ENCODE measurements at regions of chr4 and their contacts with region 1.

Region 1: DNA sequence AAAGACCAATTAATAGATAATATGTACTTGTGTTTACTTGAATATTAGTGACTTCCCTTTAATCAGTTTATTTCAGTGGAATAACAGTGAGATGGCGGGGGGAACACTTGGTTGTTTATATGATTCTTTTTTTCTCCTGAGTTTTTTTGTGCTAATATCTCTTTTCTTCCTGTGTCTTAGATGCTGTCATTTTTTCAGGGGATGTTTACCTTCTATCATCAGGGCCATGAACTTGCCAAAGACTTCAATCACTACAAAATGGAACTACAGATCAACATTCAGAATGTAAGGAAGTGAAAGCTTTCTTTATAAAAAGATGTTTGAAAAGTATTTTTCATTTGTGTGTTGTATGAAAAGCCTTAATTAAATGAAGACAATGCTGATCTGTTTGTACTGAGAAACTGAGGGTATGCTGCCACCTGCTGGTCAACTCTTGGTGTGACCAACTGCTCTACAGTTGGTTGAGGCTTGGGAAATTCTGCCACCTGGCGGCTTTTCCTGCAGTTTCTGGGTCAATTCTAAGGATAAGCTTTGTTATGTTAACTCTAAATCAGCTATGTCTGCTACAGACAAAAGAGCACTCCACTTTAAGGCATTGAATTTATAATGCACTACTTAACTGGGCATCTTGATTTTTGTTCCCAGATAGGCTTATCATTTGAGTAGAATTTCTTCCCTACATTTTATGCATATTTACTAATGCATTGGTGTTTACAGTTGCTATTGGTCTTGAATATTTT is 134.8 kb downstream of the ARHGAP10 start:
- DNase-seq: peak; percentile 81 to 94 (median 89)
- ATAC-seq: peak; percentile 99
- H3K4me3 ChIP-seq: no peak overlapping the region
- H3K27ac ChIP-seq: no peak overlapping the region
- H3K4me1 ChIP-seq: no peaks in the 10 kb centered on the region
- H3K27me3 ChIP-seq: no peaks in the 10 kb centered on the region
- CTCF ChIP-seq: peak; percentile 98 to 99

Region 2: DNA sequence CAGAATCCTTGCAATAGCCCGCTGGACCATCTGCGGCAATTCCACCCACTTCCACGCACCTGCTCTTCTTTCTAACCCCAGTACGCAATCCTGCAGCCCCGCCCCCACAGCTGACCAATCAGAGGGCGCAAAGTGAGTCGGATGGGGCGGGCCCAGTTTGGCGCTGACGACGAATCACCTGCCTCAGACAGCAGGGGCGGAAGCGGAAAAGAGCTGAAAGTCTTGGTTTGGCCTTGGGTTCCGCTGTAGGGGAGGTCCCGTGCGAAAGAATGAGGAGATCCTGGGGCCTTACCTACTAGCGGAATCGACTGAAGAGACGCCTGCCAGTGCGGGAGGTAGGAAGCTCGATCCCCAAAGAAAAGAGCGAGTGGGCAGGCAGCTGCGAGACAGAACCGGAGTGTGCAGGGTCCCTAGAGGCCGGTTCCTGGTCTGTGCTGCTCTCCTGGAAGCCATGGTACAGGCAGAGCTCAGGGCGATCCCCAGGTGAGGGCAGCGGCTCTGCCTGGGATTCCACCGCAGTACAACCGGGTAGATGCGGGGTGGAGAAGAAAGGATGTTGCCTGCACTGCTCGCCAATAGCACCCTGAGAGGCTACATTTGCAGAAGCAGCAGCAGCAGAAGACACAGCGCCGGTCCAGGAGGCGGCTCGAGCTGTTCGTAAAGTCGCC is 249.4 kb before region 1 on chr4 and contains the start of gene TMEM184C:
- intact Hi-C with region 1: loop called in 1 of 2 experiments (anchors 10 kb)
- DNase-seq: peak; percentile 87 to 98 (median 96)
- ATAC-seq: peak; percentile 99
- H3K4me3 ChIP-seq: peak within 1 kb of the TSS; percentile 69 to 76
- H3K27ac ChIP-seq: peak within 1 kb of the TSS; percentile 83 to 85
- H3K4me1 ChIP-seq: peaks cover 10 to 37% of the 10 kb centered on the region in 2 donors
- H3K27me3 ChIP-seq: no peaks in the 10 kb centered on the region
- CTCF ChIP-seq: peak in 1 of 2 donors; percentile 17
- polyA plus RNA-seq, gene TMEM184C: 33.7 to 41.9 (median 38.9) TPM

Region 3: GRCh38 chr4:147707865-147708672 is 158.6 kb before region 1 on chr4:
- intact Hi-C with region 1: loop called (anchors 5 kb)
- DNase-seq: peak in 2 of 4 donors; percentile 36 to 46
- ATAC-seq: peak; percentile 89
- H3K4me3 ChIP-seq: no peak overlapping the region
- H3K27ac ChIP-seq: no peak overlapping the region
- H3K4me1 ChIP-seq: no peaks in the 10 kb centered on the region
- H3K27me3 ChIP-seq: no peaks in the 10 kb centered on the region
- CTCF ChIP-seq: peak; percentile 83 to 99

Measured in left lung (tissue), 14 donors.